ENCODE measurements at regions of chr6 and their contacts with region 1.

Region 1: GRCh38 chr6:34610819-34611477 is 54.8 kb upstream of the SPDEF start:
- DNase-seq: no peak
- ATAC-seq: no peak
- H3K4me3 ChIP-seq: no peak overlapping the region
- H3K4me3 Mint-ChIP-seq: no peak overlapping the region
- H3K27ac ChIP-seq: peak overlapping the region in 1 of 2 donors; percentile 30
- H3K27ac Mint-ChIP-seq: no peak overlapping the region
- H3K4me1 ChIP-seq: no peaks in the 10 kb centered on the region
- H3K4me1 Mint-ChIP-seq: peaks cover 8% of the 10 kb centered on the region
- H3K27me3 ChIP-seq: no peaks in the 10 kb centered on the region
- H3K27me3 Mint-ChIP-seq: no peaks in the 10 kb centered on the region
- CTCF ChIP-seq: no peak

Region 2: GRCh38 chr6:34161857-34162515 is 449.0 kb before region 1 on chr6:
- CTCF ChIA-PET with region 1: interaction called, 33 read pairs
- POLR2A ChIA-PET with region 1: no interaction called
- intact Hi-C with region 1: loop called (anchors 1 kb)
- DNase-seq: no peak
- ATAC-seq: no peak
- H3K4me3 ChIP-seq: no peak overlapping the region
- H3K4me3 Mint-ChIP-seq: no peak overlapping the region
- H3K27ac ChIP-seq: no peak overlapping the region
- H3K27ac Mint-ChIP-seq: no peak overlapping the region
- H3K4me1 ChIP-seq: no peaks in the 10 kb centered on the region
- H3K4me1 Mint-ChIP-seq: no peaks in the 10 kb centered on the region
- H3K27me3 ChIP-seq: no peaks in the 10 kb centered on the region
- H3K27me3 Mint-ChIP-seq: peaks cover 15% of the 10 kb centered on the region
- CTCF ChIP-seq: no peak

Region 3: DNA sequence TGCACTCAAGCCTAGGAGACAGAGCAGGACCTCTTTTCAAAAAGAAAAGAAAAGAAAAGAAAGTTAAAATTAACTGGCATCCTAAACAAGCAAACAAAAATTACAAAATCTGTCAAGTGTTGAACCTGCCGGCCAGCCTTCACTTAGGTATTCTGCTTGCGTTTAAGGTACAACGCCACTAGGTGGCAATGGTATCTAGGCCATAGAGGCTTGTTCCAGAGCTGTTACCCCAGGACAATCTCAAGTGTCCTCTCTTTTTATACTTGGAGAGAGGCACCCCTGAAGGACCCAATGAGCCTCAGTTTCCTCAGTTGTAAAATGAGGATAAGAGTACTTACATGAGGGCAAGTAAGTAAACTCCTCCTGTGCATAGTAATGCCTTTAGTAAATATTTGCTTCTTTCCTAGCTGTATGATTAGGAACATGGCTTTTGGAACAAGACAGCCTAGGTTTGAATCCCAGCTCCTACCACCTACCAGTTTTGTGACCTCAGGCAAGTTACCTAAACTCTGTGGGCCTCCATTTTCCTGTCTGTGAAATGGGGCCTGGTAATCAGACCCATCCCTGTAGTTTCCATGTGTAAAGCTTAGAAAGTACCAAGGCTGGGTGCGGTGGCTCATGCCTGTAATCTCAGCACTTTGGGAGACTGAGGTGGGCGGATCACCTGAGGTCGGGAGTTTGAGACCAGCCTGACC is 150.9 kb before region 1 on chr6:
- CTCF ChIA-PET with region 1: interaction called, 178 read pairs
- POLR2A ChIA-PET with region 1: no interaction called
- intact Hi-C with region 1: loop called (anchors 1 kb)
- DNase-seq: peak; percentile 66
- ATAC-seq: peak; percentile 81
- H3K4me3 ChIP-seq: no peak overlapping the region
- H3K4me3 Mint-ChIP-seq: no peak overlapping the region
- H3K27ac ChIP-seq: no peak overlapping the region
- H3K27ac Mint-ChIP-seq: no peak overlapping the region
- H3K4me1 ChIP-seq: peaks cover under 1% of the 10 kb centered on the region in 2 donors
- H3K4me1 Mint-ChIP-seq: peaks cover 3% of the 10 kb centered on the region
- H3K27me3 ChIP-seq: peaks cover 0 to 16% (median 4%) of the 10 kb centered on the region in 4 experiments
- H3K27me3 Mint-ChIP-seq: peaks cover 11% of the 10 kb centered on the region
- CTCF ChIP-seq: peak; percentile 80

Region 4: DNA sequence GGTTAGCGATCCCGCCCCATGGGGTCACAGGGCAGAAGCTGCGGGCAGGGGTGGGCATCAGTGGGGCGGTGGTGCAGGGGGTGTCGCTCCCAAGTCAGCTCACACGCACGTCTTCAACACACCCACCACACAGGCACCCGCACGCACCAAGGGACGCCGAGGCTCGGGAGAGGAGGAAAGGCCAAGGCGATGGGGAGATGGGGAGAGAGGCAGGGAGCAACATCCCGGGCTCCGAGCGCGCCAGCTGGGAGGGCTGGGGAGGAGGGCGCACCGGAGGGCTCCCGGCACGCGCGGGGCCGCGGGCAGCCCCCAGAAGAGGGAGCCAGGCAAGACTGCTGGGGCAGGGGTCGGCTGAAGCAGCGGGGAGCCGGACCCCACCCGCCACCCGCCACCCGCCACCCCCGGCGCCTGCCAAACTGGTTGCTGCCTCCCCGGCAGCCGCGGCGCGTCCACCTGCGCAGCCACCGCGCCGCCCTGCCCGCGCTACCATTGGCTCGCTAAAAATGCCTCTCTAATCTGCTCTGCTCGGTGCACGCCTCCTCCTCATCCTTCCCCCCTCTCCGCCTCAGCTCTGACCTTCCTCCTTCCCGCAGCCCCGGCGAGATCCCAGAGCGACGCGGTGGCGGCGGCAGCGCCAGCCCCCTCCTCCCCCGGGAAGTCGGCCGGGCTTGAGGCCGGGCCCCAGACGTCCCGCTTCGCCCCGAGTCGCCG is 145.3 kb before region 1 on chr6 and contains the start of gene PACSIN1:
- CTCF ChIA-PET with region 1: interaction called, 178 read pairs
- POLR2A ChIA-PET with region 1: no interaction called
- intact Hi-C with region 1: loop called (anchors 1 kb)
- DNase-seq: peak; percentile 42
- ATAC-seq: peak; percentile 46
- H3K4me3 ChIP-seq: peak within 1 kb of the TSS in 4 of 5 experiments; percentile 17 to 53 (median 46)
- H3K4me3 Mint-ChIP-seq: peak within 1 kb of the TSS; percentile 78
- H3K27ac ChIP-seq: no peak within 1 kb of the TSS
- H3K27ac Mint-ChIP-seq: peak within 1 kb of the TSS; percentile 50
- H3K4me1 ChIP-seq: peaks cover 28 to 36% of the 10 kb centered on the region in 2 donors
- H3K4me1 Mint-ChIP-seq: peaks cover 38% of the 10 kb centered on the region
- H3K27me3 ChIP-seq: peaks cover 0 to 28% (median 7%) of the 10 kb centered on the region in 4 experiments
- H3K27me3 Mint-ChIP-seq: peaks cover 17% of the 10 kb centered on the region
- CTCF ChIP-seq: no peak
- total RNA-seq, gene PACSIN1: 0.20 TPM in 1 of 2 replicates, not detected in the other

Region 5: GRCh38 chr6:34526992-34527728 is 83.8 kb before region 1 on chr6:
- CTCF ChIA-PET with region 1: interaction called, 19 read pairs
- POLR2A ChIA-PET with region 1: no interaction called
- intact Hi-C with region 1: loop called (anchors 1 kb)
- DNase-seq: peak; percentile 96
- ATAC-seq: peak; percentile 99
- H3K4me3 ChIP-seq: peak overlapping the region in 4 of 5 experiments; percentile 11 to 44 (median 30)
- H3K4me3 Mint-ChIP-seq: peak overlapping the region; percentile 71
- H3K27ac ChIP-seq: peak overlapping the region in 1 of 2 donors; percentile 22
- H3K27ac Mint-ChIP-seq: peak overlapping the region; percentile 78
- H3K4me1 ChIP-seq: peaks cover 7 to 13% of the 10 kb centered on the region in 2 donors
- H3K4me1 Mint-ChIP-seq: peaks cover 10% of the 10 kb centered on the region
- H3K27me3 ChIP-seq: no peaks in the 10 kb centered on the region
- H3K27me3 Mint-ChIP-seq: no peaks in the 10 kb centered on the region
- CTCF ChIP-seq: peak; percentile 65

Region 6: DNA sequence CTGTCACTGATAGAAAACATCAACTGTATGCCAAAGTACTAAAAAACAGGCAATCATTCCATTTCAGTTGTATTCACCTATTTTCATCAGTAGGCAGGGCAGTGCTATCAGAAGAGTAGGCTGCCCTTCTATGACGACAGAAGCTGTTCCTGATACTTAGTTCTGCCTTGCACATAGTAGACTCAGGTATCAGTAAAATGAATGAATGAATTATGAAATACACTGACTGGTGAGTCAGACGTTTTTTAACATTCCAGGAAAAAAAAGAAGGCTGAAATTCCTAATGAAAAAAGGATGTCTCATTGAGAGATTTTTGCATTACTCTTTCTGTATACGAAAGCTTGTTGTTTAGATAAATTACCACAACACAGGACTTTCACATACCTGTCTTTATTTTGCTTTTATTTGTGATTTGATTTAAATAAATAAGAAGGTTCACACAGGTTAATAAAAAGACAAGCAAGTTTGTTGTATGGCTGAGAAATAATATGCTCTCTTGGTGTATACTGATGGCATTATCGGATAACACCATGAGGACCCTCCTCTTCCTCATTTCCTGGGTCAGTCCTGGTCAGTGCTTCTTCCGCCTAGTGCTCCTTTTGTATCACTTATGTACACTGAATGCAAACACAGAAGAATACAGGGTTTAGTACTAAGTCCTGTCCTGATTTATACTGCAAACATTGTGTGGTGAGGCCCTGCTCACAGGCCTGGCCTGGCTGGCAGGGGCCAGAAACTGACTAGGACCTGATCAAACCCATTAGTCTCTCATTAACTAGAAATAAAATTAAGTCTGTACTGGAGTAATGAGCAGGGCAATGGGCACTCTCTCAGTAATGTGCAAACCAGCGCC is 15.4 kb before region 1 on chr6:
- CTCF ChIA-PET with region 1: interaction called, 46 read pairs
- POLR2A ChIA-PET with region 1: no interaction called
- intact Hi-C with region 1: no loop called
- DNase-seq: no peak
- ATAC-seq: no peak
- H3K4me3 ChIP-seq: no peak overlapping the region
- H3K4me3 Mint-ChIP-seq: no peak overlapping the region
- H3K27ac ChIP-seq: no peak overlapping the region
- H3K27ac Mint-ChIP-seq: no peak overlapping the region
- H3K4me1 ChIP-seq: peaks cover 21 to 27% of the 10 kb centered on the region in 2 donors
- H3K4me1 Mint-ChIP-seq: peaks cover 62% of the 10 kb centered on the region
- H3K27me3 ChIP-seq: no peaks in the 10 kb centered on the region
- H3K27me3 Mint-ChIP-seq: no peaks in the 10 kb centered on the region
- CTCF ChIP-seq: no peak

Measured in B cell (primary cell).